Stomach (tissue), 19 donors: ENCODE measurements at regions of chr16 and their contacts with region 1.

Region 1: GRCh38 chr16:57576429-57576870 is 34.0 kb downstream of the ADGRG5 start:
- DNase-seq: peak; percentile 87 to 92
- H3K4me3 ChIP-seq: no peak overlapping the region
- H3K27ac ChIP-seq: peak overlapping the region in 1 of 5 donors; percentile 20
- H3K4me1 ChIP-seq: peaks cover 0 to 12% (median 4%) of the 10 kb centered on the region in 4 donors
- H3K27me3 ChIP-seq: peaks cover 0 to 33% (median 0%) of the 10 kb centered on the region in 3 donors
- CTCF ChIP-seq: peak in 5 of 7 experiments; percentile 83 to 92 (median 88)
- EP300 ChIP-seq: no peak
- POLR2A ChIP-seq: no peak

Region 2: DNA sequence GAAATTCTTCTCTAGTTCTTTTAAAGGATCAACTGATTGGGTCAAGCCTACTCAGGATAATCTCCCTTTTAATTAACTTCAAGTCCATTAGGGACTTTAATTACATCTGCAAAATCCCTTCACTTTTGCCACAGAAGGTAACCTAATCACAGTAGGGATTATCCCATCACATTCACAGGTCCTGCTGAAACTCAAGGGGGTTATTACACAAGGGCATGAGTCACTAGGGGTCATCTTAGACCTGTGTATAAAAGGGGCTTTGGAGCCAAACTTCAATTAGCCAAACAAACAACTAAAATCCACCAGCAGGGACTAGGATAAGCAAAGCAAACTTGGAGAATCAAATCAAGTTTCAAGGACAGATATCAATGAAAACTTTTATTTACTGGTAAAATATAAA is 148.6 kb before region 1 on chr16:
- intact Hi-C with region 1: no loop called
- DNase-seq: no peak
- H3K4me3 ChIP-seq: no peak overlapping the region
- H3K27ac ChIP-seq: no peak overlapping the region
- H3K4me1 ChIP-seq: peaks cover 0 to 21% (median 9%) of the 10 kb centered on the region in 4 donors
- H3K27me3 ChIP-seq: no peaks in the 10 kb centered on the region
- CTCF ChIP-seq: no peak
- EP300 ChIP-seq: no peak
- POLR2A ChIP-seq: no peak

Region 3: GRCh38 chr16:57720142-57720575 is 143.7 kb after region 1 on chr16:
- intact Hi-C with region 1: loop called (anchors 10 kb)
- DNase-seq: peak; percentile 81 to 85
- H3K4me3 ChIP-seq: no peak overlapping the region
- H3K27ac ChIP-seq: no peak overlapping the region
- H3K4me1 ChIP-seq: no peaks in the 10 kb centered on the region
- H3K27me3 ChIP-seq: peaks cover 0 to 10% (median 0%) of the 10 kb centered on the region in 3 donors
- CTCF ChIP-seq: peak in 5 of 7 experiments; percentile 33 to 78 (median 66)
- EP300 ChIP-seq: no peak
- POLR2A ChIP-seq: no peak